ENCODE measurements at regions of chr19 and their contacts with region 1.

Region 1: GRCh38 chr19:45506246-45506990 is 861 bp upstream of the VASP start:
- DNase-seq: peak; percentile 95
- ATAC-seq: peak; percentile 78 to 88 (median 83)
- H3K4me3 ChIP-seq: peak overlapping the region; percentile 76 to 100 (median 97)
- H3K27ac ChIP-seq: peak overlapping the region; percentile 76 to 99 (median 97)
- H3K4me1 ChIP-seq: peaks cover 0 to 48% (median 21%) of the 10 kb centered on the region in 9 donors
- H3K27me3 ChIP-seq: no peaks in the 10 kb centered on the region
- CTCF ChIP-seq: peak in 8 of 9 donors; percentile 27 to 76 (median 54)

Region 2: GRCh38 chr19:45569619-45570421 is 63.4 kb after region 1 on chr19:
- intact Hi-C with region 1: loop called in 2 of 10 experiments (anchors 5 kb)
- DNase-seq: peak; percentile 45 to 73
- ATAC-seq: peak; percentile 61 to 83 (median 72)
- H3K4me3 ChIP-seq: no peak overlapping the region
- H3K27ac ChIP-seq: peak overlapping the region; percentile 4 to 84 (median 69)
- H3K4me1 ChIP-seq: peaks cover 2 to 43% (median 27%) of the 10 kb centered on the region in 9 donors
- H3K27me3 ChIP-seq: no peaks in the 10 kb centered on the region
- CTCF ChIP-seq: peak; percentile 65 to 80 (median 74)

Region 3: DNA sequence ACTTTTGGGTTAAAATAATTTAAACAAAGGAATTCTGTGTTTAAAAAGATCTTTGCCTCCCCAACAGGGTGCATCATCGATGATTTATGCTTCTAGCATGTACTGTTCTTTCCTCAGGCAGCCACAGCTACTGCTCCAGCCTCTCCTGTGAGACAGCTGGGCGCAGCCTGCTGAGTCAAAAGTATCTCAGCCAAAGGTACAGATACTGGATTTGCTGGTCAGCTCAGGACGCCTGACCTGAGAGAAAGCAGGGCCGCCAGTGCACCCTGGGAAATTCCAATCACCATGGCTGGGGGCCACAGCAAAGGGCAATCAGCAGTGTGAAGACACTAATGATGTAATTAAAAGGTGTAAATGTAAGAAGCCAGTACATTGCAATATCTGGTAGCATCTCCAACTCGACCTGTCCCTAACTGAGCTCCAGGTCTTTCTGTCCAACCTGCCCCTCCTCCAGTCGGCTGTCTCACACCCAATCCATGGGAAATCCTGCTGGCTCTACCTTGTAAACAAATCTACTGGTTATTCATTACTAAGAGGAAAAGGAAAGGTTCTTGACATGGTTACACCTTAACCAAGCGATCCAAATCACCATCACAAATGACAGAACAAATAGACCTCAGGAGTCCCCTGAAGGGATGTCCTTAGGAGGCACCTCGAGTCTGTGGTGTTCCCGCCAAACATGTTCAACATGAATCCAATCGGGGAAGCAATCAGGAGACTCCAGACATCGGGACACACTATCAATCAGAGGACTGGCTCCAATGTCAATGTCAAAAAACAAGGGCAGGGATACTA is 70.9 kb after region 1 on chr19:
- intact Hi-C with region 1: loop called in 2 of 10 experiments (anchors 5 kb)
- DNase-seq: peak in 1 of 2 donors; percentile 38
- ATAC-seq: peak; percentile 65 to 87 (median 80)
- H3K4me3 ChIP-seq: no peak overlapping the region
- H3K27ac ChIP-seq: peak overlapping the region; percentile 40 to 80 (median 66)
- H3K4me1 ChIP-seq: peaks cover 0 to 58% (median 24%) of the 10 kb centered on the region in 9 donors
- H3K27me3 ChIP-seq: no peaks in the 10 kb centered on the region
- CTCF ChIP-seq: no peak

Measured in heart right ventricle (tissue), 16 donors.